ENCODE measurements at regions of chr5 and their contacts with region 1.

Region 1: DNA sequence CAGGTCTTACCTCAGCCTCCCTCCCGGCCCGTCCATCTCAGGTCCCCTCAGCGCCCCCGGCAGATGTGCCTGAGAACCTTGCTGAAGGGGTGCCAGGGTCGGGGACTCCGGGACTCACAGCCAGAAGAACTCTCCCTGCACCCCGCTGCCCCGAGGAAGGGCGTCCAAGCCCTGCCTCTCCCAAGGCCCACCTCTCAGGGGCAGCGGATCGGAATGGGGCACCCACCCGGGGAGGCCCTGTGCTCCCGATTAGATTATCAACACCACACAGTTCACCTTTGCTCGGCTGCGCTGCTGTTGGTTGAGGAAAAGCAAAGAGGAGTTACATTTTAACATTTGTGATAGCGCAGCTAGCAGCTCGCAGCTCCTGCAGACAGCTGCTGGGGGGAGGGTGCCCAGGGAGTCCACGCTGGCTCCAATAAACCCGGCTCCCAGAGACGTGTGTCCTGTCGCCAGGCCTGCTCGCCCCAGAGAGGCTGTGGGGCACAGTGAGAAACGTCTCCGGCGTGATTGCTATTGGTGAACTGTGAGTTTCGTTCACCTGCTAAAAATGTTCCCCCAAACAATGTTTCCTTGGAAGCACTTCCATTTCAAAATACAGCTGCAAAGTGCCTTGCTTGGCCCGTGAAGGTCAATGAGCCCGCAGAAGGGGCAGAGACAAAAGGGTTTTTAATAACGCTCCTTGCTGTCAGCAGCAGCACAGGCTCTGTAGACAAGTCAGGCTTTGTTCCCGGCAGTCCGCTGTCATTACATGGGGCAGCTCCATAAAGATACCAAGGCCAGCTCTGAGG is 18.6 kb upstream of the SLC6A19 start:
- DNase-seq: peak; percentile 38 to 90 (median 78)

Region 2: GRCh38 chr5:1344975-1345838 is 162.4 kb after region 1 on chr5 and contains the start of gene CLPTM1L:
- intact Hi-C with region 1: loop called (anchors 10 kb)
- DNase-seq: peak; percentile 45 to 93 (median 84)

Measured in head of caudate nucleus (tissue), 42 donors.